Natural killer cell (primary cell): ENCODE measurements at regions of chr2 and their contacts with region 1.

Region 1: DNA sequence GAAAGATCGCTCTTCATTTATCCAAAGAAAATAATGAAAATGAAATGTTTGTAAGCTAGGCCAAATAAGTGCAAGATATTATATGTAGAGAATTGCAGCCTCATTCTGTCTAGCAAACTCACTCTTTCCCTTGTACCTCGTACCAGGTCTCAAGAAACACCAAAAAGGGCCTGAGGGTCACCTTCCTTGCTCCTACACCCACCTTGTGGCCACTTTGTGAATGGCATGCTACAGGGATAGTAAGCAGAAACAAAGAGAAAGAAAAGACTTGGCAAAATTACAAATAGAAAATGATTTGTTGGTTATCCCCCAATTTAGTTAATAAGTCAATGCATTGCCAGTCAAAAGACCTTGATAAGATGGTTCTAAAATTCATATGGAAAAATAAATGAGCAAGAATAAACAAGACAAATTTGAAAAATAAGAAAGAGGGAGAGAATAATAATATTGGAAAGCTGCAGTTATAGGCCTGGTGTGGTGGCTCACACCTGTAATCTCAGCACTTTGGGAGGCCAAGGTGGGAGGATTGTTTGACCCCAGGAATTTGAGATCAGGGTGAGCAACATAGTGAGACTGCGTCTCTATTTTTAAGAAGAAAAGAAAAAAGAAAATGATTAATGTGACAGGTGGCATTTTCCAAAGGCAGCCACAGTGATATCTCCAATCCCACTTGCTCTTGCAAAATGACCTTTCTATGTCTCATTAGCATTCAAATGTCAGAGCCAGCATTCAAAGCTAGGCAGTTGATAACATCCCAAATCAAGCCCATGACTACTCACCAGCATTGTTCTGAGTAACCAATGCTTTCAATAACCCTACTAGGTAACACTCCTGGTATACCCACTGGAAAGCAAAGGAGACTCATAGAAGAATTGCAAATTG is 38.8 kb upstream of the BMP10 start:
- DNase-seq: peak; percentile 47 to 85
- ATAC-seq: peak; percentile 38 to 55 (median 43)
- H3K4me3 ChIP-seq: no peak overlapping the region
- H3K4me3 Mint-ChIP-seq: peak overlapping the region; percentile 59
- H3K27ac ChIP-seq: no peak overlapping the region
- H3K27ac Mint-ChIP-seq: peak overlapping the region; percentile 1 to 3
- H3K4me1 ChIP-seq: peaks cover 43% of the 10 kb centered on the region
- H3K4me1 Mint-ChIP-seq: peaks cover 25% of the 10 kb centered on the region in 2 donors
- H3K27me3 ChIP-seq: no peaks in the 10 kb centered on the region
- H3K27me3 Mint-ChIP-seq: no peaks in the 10 kb centered on the region
- CTCF ChIP-seq: peak; percentile 88

Region 2: DNA sequence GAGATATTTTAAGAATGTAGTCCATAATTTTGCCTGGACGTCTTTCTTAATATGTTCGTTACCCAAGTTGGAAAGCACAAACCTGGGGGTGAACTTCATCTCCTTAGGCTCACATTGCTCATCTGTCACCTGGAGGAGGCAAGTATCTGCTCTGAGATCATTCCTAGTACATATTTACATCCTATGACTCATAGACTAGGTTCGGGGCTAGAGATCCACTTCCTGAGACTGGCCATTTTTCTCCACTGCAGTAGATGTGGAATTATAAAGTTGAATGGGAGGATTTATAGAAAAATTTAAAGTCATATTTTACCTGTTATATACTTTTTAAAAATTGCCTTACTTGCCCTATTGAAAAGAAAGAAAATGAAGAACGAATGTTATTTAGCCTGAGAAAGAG is 344.2 kb before region 1 on chr2:
- intact Hi-C with region 1: no loop called
- DNase-seq: no peak
- ATAC-seq: no peak
- H3K4me3 ChIP-seq: no peak overlapping the region
- H3K4me3 Mint-ChIP-seq: no peak overlapping the region
- H3K27ac ChIP-seq: no peak overlapping the region
- H3K27ac Mint-ChIP-seq: no peak overlapping the region
- H3K4me1 ChIP-seq: no peaks in the 10 kb centered on the region
- H3K4me1 Mint-ChIP-seq: no peaks in the 10 kb centered on the region
- H3K27me3 ChIP-seq: no peaks in the 10 kb centered on the region
- H3K27me3 Mint-ChIP-seq: no peaks in the 10 kb centered on the region
- CTCF ChIP-seq: no peak

Region 3: GRCh38 chr2:68605939-68606338 is 304.1 kb before region 1 on chr2:
- intact Hi-C with region 1: loop called (anchors 10 kb)
- DNase-seq: no peak
- ATAC-seq: peak in 2 of 3 donors; percentile 64 to 82
- H3K4me3 ChIP-seq: no peak overlapping the region
- H3K4me3 Mint-ChIP-seq: peak overlapping the region; percentile 72
- H3K27ac ChIP-seq: peak overlapping the region; percentile 58
- H3K27ac Mint-ChIP-seq: peak overlapping the region; percentile 74 to 81
- H3K4me1 ChIP-seq: peaks cover 10% of the 10 kb centered on the region
- H3K4me1 Mint-ChIP-seq: peaks cover 33 to 34% of the 10 kb centered on the region in 2 donors
- H3K27me3 ChIP-seq: no peaks in the 10 kb centered on the region
- H3K27me3 Mint-ChIP-seq: no peaks in the 10 kb centered on the region
- CTCF ChIP-seq: no peak

Region 4: GRCh38 chr2:68715353-68716041 is 194.5 kb before region 1 on chr2:
- intact Hi-C with region 1: loop called (anchors 5 kb)
- DNase-seq: peak; percentile 34 to 79
- ATAC-seq: peak; percentile 51 to 76 (median 72)
- H3K4me3 ChIP-seq: no peak overlapping the region
- H3K4me3 Mint-ChIP-seq: no peak overlapping the region
- H3K27ac ChIP-seq: peak overlapping the region; percentile 34
- H3K27ac Mint-ChIP-seq: peak overlapping the region in 1 of 2 donors; percentile 13
- H3K4me1 ChIP-seq: peaks cover 29% of the 10 kb centered on the region
- H3K4me1 Mint-ChIP-seq: peaks cover 41 to 48% of the 10 kb centered on the region in 2 donors
- H3K27me3 ChIP-seq: peaks cover 13% of the 10 kb centered on the region
- H3K27me3 Mint-ChIP-seq: peaks cover 68 to 100% of the 10 kb centered on the region in 2 donors
- CTCF ChIP-seq: peak; percentile 65

Region 5: GRCh38 chr2:68766376-68766845 is 143.6 kb before region 1 on chr2:
- intact Hi-C with region 1: loop called (anchors 5 kb)
- DNase-seq: peak; percentile 66 to 88
- ATAC-seq: peak; percentile 56 to 84 (median 76)
- H3K4me3 ChIP-seq: peak overlapping the region; percentile 6
- H3K4me3 Mint-ChIP-seq: peak overlapping the region; percentile 81
- H3K27ac ChIP-seq: peak overlapping the region; percentile 96
- H3K27ac Mint-ChIP-seq: peak overlapping the region in 1 of 2 donors; percentile 93
- H3K4me1 ChIP-seq: peaks cover 79% of the 10 kb centered on the region
- H3K4me1 Mint-ChIP-seq: peaks cover 92 to 98% of the 10 kb centered on the region in 2 donors
- H3K27me3 ChIP-seq: no peaks in the 10 kb centered on the region
- H3K27me3 Mint-ChIP-seq: peaks cover 0 to 4% of the 10 kb centered on the region in 2 donors
- CTCF ChIP-seq: no peak

Region 6: GRCh38 chr2:68832233-68832869 is 77.7 kb before region 1 on chr2:
- intact Hi-C with region 1: loop called (anchors 2 kb)
- DNase-seq: peak; percentile 53 to 54
- ATAC-seq: peak; percentile 82 to 84 (median 83)
- H3K4me3 ChIP-seq: no peak overlapping the region
- H3K4me3 Mint-ChIP-seq: peak overlapping the region; percentile 61
- H3K27ac ChIP-seq: peak overlapping the region; percentile 35
- H3K27ac Mint-ChIP-seq: peak overlapping the region; percentile 92 to 97
- H3K4me1 ChIP-seq: peaks cover 38% of the 10 kb centered on the region
- H3K4me1 Mint-ChIP-seq: peaks cover 56 to 59% of the 10 kb centered on the region in 2 donors
- H3K27me3 ChIP-seq: no peaks in the 10 kb centered on the region
- H3K27me3 Mint-ChIP-seq: no peaks in the 10 kb centered on the region
- CTCF ChIP-seq: no peak